Psoas muscle (tissue), 8 donors: ENCODE measurements at regions of chr5 and their contacts with region 1.

Region 1: GRCh38 chr5:122008061-122008460 is 46.3 kb downstream of the SRFBP1 start:
- DNase-seq: no peak
- ATAC-seq: no peak
- H3K4me3 ChIP-seq: no peak overlapping the region
- H3K27ac ChIP-seq: no peak overlapping the region
- H3K4me1 ChIP-seq: peaks cover 6% of the 10 kb centered on the region
- H3K27me3 ChIP-seq: no peaks in the 10 kb centered on the region
- CTCF ChIP-seq: no peak

Region 2: DNA sequence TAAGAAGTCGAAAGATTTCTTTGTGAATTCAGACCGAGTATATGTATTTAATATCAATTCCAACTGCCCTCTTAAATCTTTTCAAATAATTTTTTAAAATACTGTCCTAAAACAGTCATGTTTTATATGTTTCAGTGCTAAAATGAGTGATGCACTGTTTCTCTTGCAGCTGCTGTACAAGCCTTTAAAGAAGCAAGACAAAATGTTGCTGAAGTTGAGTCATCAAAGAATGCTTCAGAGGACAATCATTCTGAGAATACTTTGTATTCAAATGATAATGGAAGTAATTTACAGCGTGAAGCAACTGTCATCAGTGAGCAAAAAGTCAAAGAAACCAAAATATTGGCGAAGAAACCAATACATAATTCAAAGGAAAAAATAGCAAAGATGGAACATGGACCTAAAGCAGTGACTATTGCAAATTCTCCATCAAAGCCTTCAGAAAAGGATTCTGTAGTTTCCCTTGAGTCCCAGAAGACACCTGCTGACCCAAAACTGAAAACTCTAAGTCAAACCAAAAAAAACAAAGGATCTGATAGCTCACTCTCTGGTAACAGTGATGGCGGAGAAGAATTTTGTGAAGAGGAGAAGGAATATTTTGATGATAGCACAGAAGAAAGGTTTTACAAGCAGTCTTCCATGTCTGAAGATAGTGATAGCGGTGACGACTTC is 12.0 kb after region 1 on chr5:
- intact Hi-C with region 1: loop called in 1 of 2 experiments (anchors 1 kb)
- DNase-seq: no peak
- ATAC-seq: no peak
- H3K4me3 ChIP-seq: no peak overlapping the region
- H3K27ac ChIP-seq: no peak overlapping the region
- H3K4me1 ChIP-seq: no peaks in the 10 kb centered on the region
- H3K27me3 ChIP-seq: no peaks in the 10 kb centered on the region
- CTCF ChIP-seq: no peak

Region 3: DNA sequence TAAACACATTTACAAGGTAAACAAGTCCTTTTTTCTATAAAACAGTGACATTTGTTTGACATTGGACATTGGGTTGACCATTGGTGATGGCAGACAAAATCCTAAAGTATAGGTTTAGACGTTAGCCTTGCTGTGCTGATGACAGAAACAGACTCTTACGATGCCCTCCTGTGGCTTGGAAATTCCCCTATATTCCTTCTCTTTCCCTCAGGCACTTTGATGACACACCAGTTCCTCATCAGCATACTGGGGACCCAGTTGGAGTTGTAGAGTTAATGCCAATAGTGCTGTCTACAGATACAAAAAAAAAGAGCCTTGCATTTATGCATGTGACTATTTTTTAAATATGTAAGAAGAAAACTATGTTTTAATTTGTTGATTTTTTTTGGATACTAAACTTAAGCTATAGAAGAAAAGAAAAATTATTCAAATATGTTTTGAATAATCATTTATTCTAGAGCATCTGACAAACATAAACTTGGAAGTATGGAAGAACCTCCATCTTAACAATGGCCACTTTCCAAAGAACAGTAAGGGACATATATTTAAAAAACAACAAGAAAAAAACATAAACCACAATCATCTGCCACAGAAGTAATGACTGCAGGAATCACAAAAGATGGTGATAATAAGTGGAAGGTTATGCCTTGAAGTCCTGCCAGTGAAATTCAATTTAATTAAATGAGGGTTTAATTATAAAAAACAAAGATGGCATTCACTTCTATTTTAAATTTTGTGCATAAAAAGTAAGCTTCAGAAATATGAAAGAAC is 228.4 kb after region 1 on chr5:
- intact Hi-C with region 1: no loop called
- DNase-seq: no peak
- ATAC-seq: no peak
- H3K4me3 ChIP-seq: no peak overlapping the region
- H3K27ac ChIP-seq: no peak overlapping the region
- H3K4me1 ChIP-seq: no peaks in the 10 kb centered on the region
- H3K27me3 ChIP-seq: no peaks in the 10 kb centered on the region
- CTCF ChIP-seq: no peak